Ascending aorta (tissue), 2 donors: ENCODE measurements at regions of chr4 and their contacts with region 1.

Region 1: DNA sequence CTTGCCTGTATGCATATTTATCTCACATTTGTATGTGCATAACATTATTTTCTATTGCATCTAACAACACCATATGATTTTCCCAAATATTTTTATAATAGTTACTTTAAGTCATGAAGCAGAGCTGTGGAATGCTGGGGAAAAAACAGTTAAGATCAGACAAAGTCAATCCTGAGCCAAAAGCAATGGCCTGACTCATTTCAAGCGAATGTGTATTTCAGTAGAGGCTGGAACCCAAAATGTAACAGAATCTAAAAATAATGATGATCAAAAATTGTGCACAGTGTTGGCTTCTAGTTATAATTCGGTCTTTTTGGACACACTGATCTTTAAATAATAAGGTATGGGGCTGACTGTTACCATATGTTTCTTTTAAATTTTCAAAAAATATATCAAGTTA is 516.2 kb upstream of the ADGRL3 start:
- DNase-seq: peak in 1 of 2 donors; percentile 70
- H3K4me3 ChIP-seq: peak overlapping the region in 1 of 2 donors; percentile 25
- H3K27ac ChIP-seq: peak overlapping the region; percentile 50 to 70
- H3K4me1 ChIP-seq: peaks cover 0 to 9% of the 10 kb centered on the region in 2 donors
- H3K27me3 ChIP-seq: no peaks in the 10 kb centered on the region
- CTCF ChIP-seq: no peak

Region 2: GRCh38 chr4:60575336-60575735 is 108.6 kb before region 1 on chr4:
- intact Hi-C with region 1: no loop called
- DNase-seq: no peak
- H3K4me3 ChIP-seq: no peak overlapping the region
- H3K27ac ChIP-seq: no peak overlapping the region
- H3K4me1 ChIP-seq: no peaks in the 10 kb centered on the region
- H3K27me3 ChIP-seq: no peaks in the 10 kb centered on the region
- CTCF ChIP-seq: no peak

Region 3: GRCh38 chr4:60724623-60725022 is 40.6 kb after region 1 on chr4:
- intact Hi-C with region 1: loop called (anchors 2 kb)
- DNase-seq: peak in 1 of 2 donors; percentile 72
- H3K4me3 ChIP-seq: no peak overlapping the region
- H3K27ac ChIP-seq: peak overlapping the region; percentile 66 to 69
- H3K4me1 ChIP-seq: peaks cover 2 to 16% of the 10 kb centered on the region in 2 donors
- H3K27me3 ChIP-seq: no peaks in the 10 kb centered on the region
- CTCF ChIP-seq: no peak